Common myeloid progenitor, CD34-positive (primary cell): ENCODE measurements at regions of chr9 and their contacts with region 1.

Region 1: GRCh38 chr9:99140685-99141314 is 35.9 kb downstream of the TGFBR1 start:
- DNase-seq: peak; percentile 68 to 85 (median 79)
- H3K4me3 ChIP-seq: no peak overlapping the region
- H3K27ac ChIP-seq: no peak overlapping the region
- H3K4me1 ChIP-seq: peaks cover 16 to 37% (median 27%) of the 10 kb centered on the region in 4 experiments
- H3K27me3 ChIP-seq: no peaks in the 10 kb centered on the region

Region 2: DNA sequence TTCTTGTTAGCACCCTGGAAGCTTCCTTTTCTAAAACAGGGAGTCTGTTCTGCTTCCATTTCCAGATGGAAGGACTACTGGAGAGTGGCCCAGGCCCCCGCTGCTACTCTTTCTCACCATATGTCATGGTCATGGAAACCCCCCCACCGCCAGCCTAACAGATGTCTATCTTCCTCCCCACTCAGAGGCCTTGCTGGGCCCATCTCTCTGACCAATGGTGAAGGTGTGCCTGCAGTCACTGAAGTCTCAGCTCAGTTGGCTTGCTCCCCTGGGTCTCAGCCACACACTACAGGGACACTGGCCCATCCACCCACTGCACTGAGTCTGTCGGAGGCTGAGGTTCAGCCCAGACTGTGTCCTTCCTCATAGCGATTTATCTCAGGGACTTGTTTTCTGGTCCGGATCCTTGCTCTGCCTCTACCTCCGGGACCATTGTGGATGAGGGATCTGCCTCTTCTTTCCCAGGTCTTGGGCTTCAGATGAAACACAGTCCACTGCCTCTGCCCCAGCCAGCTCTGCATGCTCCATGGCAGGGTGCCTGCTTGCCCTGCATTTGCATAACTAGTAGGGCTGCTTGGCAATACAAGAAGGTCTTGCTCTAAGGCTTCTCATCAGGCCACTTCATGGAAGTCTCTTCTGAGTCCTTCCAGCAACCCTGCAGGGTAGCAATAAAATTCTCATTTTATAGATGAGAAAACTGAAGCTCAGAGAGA is 302.5 kb before region 1 on chr9:
- CTCF ChIA-PET with region 1: interaction called, 6 read pairs
- POLR2A ChIA-PET with region 1: interaction called, 10 read pairs
- DNase-seq: no peak
- H3K4me3 ChIP-seq: no peak overlapping the region
- H3K27ac ChIP-seq: no peak overlapping the region
- H3K4me1 ChIP-seq: no peaks in the 10 kb centered on the region
- H3K27me3 ChIP-seq: no peaks in the 10 kb centered on the region

Region 3: GRCh38 chr9:98974994-98975712 is 165.6 kb before region 1 on chr9:
- CTCF ChIA-PET with region 1: interaction called, 77 read pairs
- POLR2A ChIA-PET with region 1: no interaction called
- DNase-seq: peak; percentile 66 to 78 (median 71)
- H3K4me3 ChIP-seq: peak overlapping the region in 2 of 7 experiments; percentile 43 to 62
- H3K27ac ChIP-seq: no peak overlapping the region
- H3K4me1 ChIP-seq: peaks cover 0 to 9% (median 5%) of the 10 kb centered on the region in 4 experiments
- H3K27me3 ChIP-seq: peaks cover 0 to 14% (median 0%) of the 10 kb centered on the region in 5 experiments

Region 4: GRCh38 chr9:99050292-99050911 is 90.4 kb before region 1 on chr9:
- CTCF ChIA-PET with region 1: interaction called, 48 read pairs
- POLR2A ChIA-PET with region 1: no interaction called
- DNase-seq: no peak
- H3K4me3 ChIP-seq: no peak overlapping the region
- H3K27ac ChIP-seq: no peak overlapping the region
- H3K4me1 ChIP-seq: peaks cover 5 to 45% (median 14%) of the 10 kb centered on the region in 4 experiments
- H3K27me3 ChIP-seq: no peaks in the 10 kb centered on the region

Region 5: DNA sequence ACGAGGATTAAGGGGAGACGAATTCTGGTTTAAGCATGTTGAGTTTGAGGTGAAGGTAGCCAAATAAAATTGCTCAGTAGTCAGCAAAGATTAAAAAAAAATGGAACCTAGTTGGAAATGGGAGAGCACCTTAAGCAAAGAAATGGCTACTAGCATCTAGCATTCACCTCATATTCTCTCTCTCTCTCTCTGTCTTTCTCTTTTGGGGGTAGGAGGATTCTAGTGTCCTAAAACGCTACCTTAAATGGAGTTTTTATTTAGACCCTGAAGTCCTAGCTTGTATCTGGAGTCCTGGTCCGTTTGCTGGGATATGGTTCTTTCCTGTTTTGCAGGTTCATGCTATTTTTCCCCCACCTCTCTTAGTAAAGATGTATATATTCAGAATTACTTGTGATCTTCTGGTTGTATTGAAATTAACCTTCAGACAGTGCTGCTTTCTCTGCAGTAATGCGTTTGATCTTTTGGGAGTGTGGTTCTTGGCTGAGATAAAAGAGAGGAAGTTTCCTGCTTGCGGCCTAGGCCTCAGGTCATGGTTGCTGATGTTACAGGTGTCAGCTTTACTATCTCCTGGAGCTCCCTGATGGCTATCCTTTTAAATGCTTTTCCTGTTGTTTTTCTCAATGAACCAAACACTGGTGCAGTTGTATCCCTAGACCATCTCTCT is 27.9 kb before region 1 on chr9:
- CTCF ChIA-PET with region 1: interaction called, 10 read pairs
- POLR2A ChIA-PET with region 1: no interaction called
- DNase-seq: no peak
- H3K4me3 ChIP-seq: peak overlapping the region in 2 of 7 experiments; percentile 35 to 43
- H3K27ac ChIP-seq: peak overlapping the region in 1 of 2 experiments; percentile 40
- H3K4me1 ChIP-seq: peaks cover 37 to 79% (median 61%) of the 10 kb centered on the region in 4 experiments
- H3K27me3 ChIP-seq: no peaks in the 10 kb centered on the region